AG04449 (cell line): ENCODE measurements at regions of chr11 and their contacts with region 1.

Region 1: GRCh38 chr11:122796128-122796717 is 42.1 kb upstream of the CRTAM start:
- DNase-seq: no peak
- H3K4me3 ChIP-seq: no peak overlapping the region
- CTCF ChIP-seq: peak; percentile 87

Region 2: GRCh38 chr11:122808478-122808869 is 12.3 kb after region 1 on chr11:
- CTCF ChIA-PET with region 1: interaction called, 52 read pairs
- POLR2A ChIA-PET with region 1: no interaction called
- DNase-seq: no peak
- H3K4me3 ChIP-seq: no peak overlapping the region
- CTCF ChIP-seq: no peak